ENCODE measurements at regions of chr2 and their contacts with region 1.

Region 1: DNA sequence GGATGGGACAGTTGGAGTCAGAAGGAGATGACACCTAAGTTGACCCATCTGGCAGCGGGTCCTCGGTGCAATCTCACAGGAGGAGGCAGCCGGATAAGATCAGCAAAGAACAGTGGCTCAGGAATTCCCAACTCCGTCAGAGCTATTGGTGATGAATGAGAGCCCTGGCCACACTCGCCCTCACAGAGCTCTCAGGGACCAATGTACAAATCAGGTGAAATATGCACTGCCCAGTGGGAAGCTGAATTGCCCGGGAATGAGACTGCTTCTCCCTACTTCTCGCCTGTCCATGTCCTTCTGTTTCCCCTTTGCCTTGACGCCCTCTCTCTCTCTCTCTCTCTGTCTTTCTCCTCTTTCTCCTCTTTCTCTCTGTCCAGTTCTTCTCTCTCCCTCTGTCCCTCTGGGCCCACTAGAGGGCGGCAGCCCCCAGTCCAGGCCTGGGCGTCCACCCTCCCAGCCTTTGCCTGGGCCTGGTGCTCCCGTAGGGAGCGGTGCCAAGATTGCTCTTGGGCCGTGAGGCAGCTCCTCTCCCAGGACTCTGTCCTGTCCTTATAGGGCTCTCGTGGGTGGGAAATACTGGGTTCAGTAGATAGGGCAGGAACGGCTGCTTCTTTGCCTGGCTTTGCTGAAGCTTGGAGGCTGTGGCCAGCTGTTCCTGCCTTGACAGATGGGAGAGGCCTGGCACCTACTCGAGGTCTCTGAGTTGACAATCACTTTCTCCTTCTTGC is 28.3 kb upstream of the PUM2 start:
- DNase-seq: peak; percentile 93
- H3K4me3 ChIP-seq: no peak overlapping the region
- H3K27ac ChIP-seq: peak overlapping the region in 1 of 2 experiments; percentile 11; a peak in 1 of 4 replicates
- H3K4me1 ChIP-seq: peaks cover 0 to 16% of the 10 kb centered on the region in 2 experiments; a peak in 1 of 4 replicates
- H3K27me3 ChIP-seq: no peaks in the 10 kb centered on the region; the same call in 1 of the 2 replicates
- CTCF ChIP-seq: peak; percentile 97
- EP300 ChIP-seq: no peak
- RAD21 ChIP-seq: peak; percentile 95

Region 2: DNA sequence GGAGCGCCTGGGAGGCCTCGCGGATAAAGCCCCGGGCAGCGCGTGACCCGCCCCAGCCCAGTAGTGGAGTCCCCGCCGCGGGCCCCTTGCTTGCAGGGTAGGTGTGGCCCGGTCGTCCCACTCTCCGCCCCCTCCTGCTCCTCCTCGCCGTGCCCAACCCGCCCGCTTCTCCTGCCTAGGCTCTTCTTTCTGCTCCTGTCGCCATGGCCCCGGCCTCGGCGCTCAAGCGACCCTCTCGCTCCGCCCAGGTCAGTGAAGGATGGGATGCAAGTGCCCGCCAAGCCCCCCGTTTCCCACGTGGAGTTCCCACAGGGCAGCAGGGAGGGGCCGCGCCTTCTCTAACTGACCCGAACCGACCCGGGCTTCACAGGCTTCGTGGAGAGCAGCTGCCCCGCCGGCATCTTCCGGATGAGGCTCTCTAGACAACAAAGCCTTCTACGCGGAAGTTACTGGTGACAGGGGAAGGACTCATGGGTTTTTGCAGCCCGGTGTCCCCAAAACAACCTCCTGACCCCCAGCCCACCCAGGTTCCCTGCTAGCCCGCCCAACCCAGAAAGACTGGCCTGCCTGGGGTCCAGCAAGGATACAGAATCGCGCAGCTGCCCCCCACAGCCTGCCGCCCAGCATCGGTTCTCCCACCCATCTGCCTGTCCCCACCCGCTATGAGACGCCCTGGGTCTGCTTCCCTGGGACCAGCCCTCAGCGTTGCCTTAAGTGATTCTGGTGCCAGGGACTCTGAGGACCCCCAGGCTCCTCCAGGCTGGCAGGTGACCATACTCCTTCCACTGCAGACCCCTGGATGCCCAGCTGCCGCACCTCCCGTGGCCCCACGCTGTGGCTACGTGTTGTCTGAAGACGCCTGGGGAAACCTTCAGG is 510.0 kb before region 1 on chr2:
- CTCF ChIA-PET with region 1: no interaction called
- POLR2A ChIA-PET with region 1: no interaction called
- DNase-seq: peak; percentile 52
- H3K4me3 ChIP-seq: peak overlapping the region in 1 of 2 experiments; percentile 12; a peak in 1 of 4 replicates
- H3K27ac ChIP-seq: no peak overlapping the region
- H3K4me1 ChIP-seq: no peaks in the 10 kb centered on the region; a peak in 1 of 4 replicates
- H3K27me3 ChIP-seq: peaks cover 8% of the 10 kb centered on the region; the same call in 1 of the 2 replicates
- CTCF ChIP-seq: no peak
- EP300 ChIP-seq: no peak
- RAD21 ChIP-seq: no peak

Region 3: GRCh38 chr2:20231632-20232031 is 147.3 kb before region 1 on chr2:
- CTCF ChIA-PET with region 1: no interaction called
- POLR2A ChIA-PET with region 1: no interaction called
- DNase-seq: peak; percentile 33
- H3K4me3 ChIP-seq: no peak overlapping the region
- H3K27ac ChIP-seq: no peak overlapping the region
- H3K4me1 ChIP-seq: no peaks in the 10 kb centered on the region; a peak in 2 of 4 replicates
- H3K27me3 ChIP-seq: no peaks in the 10 kb centered on the region
- CTCF ChIP-seq: no peak
- EP300 ChIP-seq: peak in 1 of 2 experiments; percentile 28; a peak in 1 of 4 replicates
- RAD21 ChIP-seq: no peak

Region 4: DNA sequence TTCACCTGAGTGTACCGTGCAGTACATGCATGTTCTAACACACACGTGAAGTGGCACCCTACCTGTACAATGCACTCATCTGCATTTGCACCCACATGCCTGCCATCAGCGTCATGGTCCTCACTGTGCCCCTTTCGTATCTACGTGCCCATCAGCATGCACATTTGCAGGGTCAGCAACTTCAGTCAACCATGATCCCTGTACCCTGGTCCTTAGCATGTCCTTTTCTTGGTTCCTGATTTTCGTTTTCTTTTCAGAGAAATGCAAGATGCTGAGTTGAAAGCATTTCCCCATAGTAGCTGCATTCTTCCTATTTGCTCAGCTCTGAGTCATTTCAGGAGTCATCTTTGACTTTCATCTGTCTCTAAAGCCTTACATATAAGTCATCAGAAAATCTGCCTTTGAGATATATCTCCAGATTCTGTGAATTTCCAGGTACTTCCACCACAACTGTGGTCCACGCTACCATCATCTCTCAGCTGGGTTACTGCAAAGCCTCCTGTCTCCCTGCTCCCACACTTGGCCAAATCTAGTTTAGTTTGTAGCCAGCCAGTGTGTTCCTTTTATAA is 13.6 kb before region 1 on chr2:
- CTCF ChIA-PET with region 1: interaction called, 91 read pairs
- POLR2A ChIA-PET with region 1: no interaction called
- DNase-seq: no peak
- H3K4me3 ChIP-seq: no peak overlapping the region
- H3K27ac ChIP-seq: no peak overlapping the region
- H3K4me1 ChIP-seq: peaks cover 0 to 9% of the 10 kb centered on the region in 2 experiments; a peak in 1 of 4 replicates
- H3K27me3 ChIP-seq: no peaks in the 10 kb centered on the region
- CTCF ChIP-seq: no peak
- EP300 ChIP-seq: no peak
- RAD21 ChIP-seq: no peak

Region 5: GRCh38 chr2:20411361-20411894 is 32.5 kb after region 1 on chr2:
- CTCF ChIA-PET with region 1: interaction called, 176 read pairs
- POLR2A ChIA-PET with region 1: no interaction called
- DNase-seq: peak; percentile 77
- H3K4me3 ChIP-seq: no peak overlapping the region
- H3K27ac ChIP-seq: no peak overlapping the region
- H3K4me1 ChIP-seq: no peaks in the 10 kb centered on the region
- H3K27me3 ChIP-seq: peaks cover 9% of the 10 kb centered on the region; the same call in 1 of the 2 replicates
- CTCF ChIP-seq: peak; percentile 87
- EP300 ChIP-seq: no peak
- RAD21 ChIP-seq: peak; percentile 70

Region 6: GRCh38 chr2:20438334-20439192 is 59.6 kb after region 1 on chr2:
- CTCF ChIA-PET with region 1: interaction called, 59 read pairs
- POLR2A ChIA-PET with region 1: interaction called, 3 read pairs
- DNase-seq: no peak
- H3K4me3 ChIP-seq: no peak overlapping the region
- H3K27ac ChIP-seq: peak overlapping the region in 1 of 2 experiments; percentile 6; a peak in 1 of 4 replicates
- H3K4me1 ChIP-seq: peaks cover 2 to 6% of the 10 kb centered on the region in 2 experiments; a peak in 2 of 4 replicates
- H3K27me3 ChIP-seq: no peaks in the 10 kb centered on the region; the same call in 1 of the 2 replicates
- CTCF ChIP-seq: no peak
- EP300 ChIP-seq: no peak
- RAD21 ChIP-seq: no peak

Region 7: GRCh38 chr2:20625491-20626391 is 246.8 kb after region 1 on chr2:
- CTCF ChIA-PET with region 1: interaction called, 10 read pairs
- POLR2A ChIA-PET with region 1: no interaction called
- DNase-seq: no peak
- H3K4me3 ChIP-seq: no peak overlapping the region
- H3K27ac ChIP-seq: 0 out of 4 replicates have a peak overlapping the region, but pooled peaks of 1 of the 2 experiments have one; percentile 43
- H3K4me1 ChIP-seq: peaks cover 0 to 37% of the 10 kb centered on the region in 2 experiments; a peak in 1 of 4 replicates
- H3K27me3 ChIP-seq: no peaks in the 10 kb centered on the region
- CTCF ChIP-seq: no peak
- EP300 ChIP-seq: no peak
- RAD21 ChIP-seq: no peak